Stomach (tissue), 19 donors: ENCODE measurements at regions of chr11 and their contacts with region 1.

Region 1: DNA sequence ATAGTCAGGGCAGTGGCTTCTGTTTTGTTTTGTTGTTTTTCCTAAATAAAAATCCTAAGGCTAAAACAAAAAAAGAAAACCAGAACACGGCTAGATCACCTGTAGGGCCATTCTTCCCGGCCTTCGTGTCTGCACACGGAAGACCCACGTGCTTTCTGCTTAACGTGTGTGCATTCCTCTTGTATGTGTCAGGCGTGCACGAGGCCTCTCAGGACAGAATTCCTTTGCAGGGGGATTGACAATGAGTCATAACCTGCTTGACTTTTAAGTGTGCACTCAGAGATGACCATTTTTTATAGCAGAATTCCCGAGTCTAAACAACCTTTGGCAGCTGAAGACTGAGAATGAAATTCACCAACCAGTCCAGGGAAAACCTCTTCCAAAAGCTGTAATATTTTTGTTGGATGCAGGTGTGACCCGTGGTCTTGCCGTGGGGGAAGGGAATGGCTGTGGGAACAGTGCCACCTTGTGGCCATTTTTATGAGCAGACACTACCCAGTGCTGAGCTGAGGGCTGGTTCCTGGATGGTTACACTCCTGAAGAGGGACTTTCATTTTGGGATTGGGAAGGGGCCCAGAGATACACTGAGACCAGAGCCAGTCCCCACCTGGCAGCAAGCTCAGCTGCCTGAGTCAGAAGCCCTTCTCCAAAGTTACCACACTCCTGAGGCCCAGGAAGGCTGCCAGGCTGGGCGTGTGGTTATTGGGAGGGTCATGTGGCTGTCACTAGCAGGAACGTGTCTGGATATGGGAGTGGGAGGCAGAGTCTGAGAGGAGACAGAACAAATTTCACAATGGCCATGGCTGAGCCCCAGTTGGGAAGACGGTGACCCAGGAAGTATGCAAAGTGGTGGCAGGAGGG is 35.8 kb upstream of the DKK3 start:
- DNase-seq: peak; percentile 83 to 93
- H3K4me3 ChIP-seq: no peak overlapping the region
- H3K27ac ChIP-seq: peak overlapping the region in 2 of 5 donors; percentile 56 to 71
- H3K4me1 ChIP-seq: peaks cover 9 to 26% (median 21%) of the 10 kb centered on the region in 4 donors
- H3K27me3 ChIP-seq: no peaks in the 10 kb centered on the region
- CTCF ChIP-seq: peak in 6 of 7 experiments; percentile 23 to 96 (median 90)
- EP300 ChIP-seq: no peak
- POLR2A ChIP-seq: no peak

Region 2: GRCh38 chr11:11608783-11609232 is 435.4 kb before region 1 on chr11:
- intact Hi-C with region 1: no loop called
- DNase-seq: peak in 1 of 2 donors; percentile 29
- H3K4me3 ChIP-seq: no peak overlapping the region
- H3K27ac ChIP-seq: no peak overlapping the region
- H3K4me1 ChIP-seq: no peaks in the 10 kb centered on the region
- H3K27me3 ChIP-seq: no peaks in the 10 kb centered on the region
- CTCF ChIP-seq: no peak
- EP300 ChIP-seq: no peak
- POLR2A ChIP-seq: no peak

Region 3: DNA sequence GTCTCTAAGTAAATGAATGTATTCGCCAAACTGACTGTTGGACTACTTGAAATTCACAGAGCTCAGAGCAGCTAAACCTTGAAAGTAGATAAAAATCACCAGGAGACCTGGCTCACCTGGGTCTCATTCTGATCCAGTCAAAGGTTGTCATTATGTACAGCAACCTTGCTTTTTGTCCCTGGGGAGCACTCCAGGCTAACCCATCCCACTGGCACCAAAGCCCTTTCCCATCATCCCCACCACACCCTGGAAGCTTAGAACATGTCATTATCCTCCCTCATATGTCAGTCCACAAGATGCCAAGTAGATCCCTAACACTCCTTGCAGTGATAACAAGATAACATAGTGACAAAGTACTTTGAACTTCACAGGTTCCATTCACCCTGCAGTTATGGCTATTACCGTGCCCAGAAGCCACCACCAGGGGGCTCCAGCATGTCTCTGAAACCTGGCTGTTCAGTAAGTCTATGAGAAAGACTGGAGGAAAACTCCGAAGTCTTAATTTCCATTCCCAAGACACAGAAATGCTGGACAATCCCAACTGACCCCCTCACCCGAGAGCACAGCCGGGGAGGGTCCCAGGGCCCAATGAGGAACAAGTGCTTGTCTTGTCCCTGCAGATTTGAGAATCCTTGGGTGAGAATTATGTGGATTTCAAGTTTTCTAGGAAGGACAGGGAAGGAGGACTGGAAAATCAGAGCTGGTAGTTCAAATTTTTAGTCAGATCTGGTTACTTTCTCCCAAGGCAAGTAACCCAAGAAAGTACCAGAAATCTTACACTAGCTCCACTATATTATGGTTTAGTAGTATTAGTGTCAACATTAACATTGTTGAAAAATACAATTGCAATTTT is 245.4 kb before region 1 on chr11:
- intact Hi-C with region 1: loop called (anchors 5 kb)
- DNase-seq: peak; percentile 90 to 91
- H3K4me3 ChIP-seq: no peak overlapping the region
- H3K27ac ChIP-seq: no peak overlapping the region
- H3K4me1 ChIP-seq: peaks cover 0 to 6% (median 0%) of the 10 kb centered on the region in 4 donors
- H3K27me3 ChIP-seq: peaks cover 0 to 4% (median 0%) of the 10 kb centered on the region in 3 donors
- CTCF ChIP-seq: peak in 5 of 7 experiments; percentile 68 to 95 (median 90)
- EP300 ChIP-seq: no peak
- POLR2A ChIP-seq: no peak

Region 4: GRCh38 chr11:11929920-11930319 is 114.3 kb before region 1 on chr11:
- intact Hi-C with region 1: loop called (anchors 5 kb)
- DNase-seq: no peak
- H3K4me3 ChIP-seq: no peak overlapping the region
- H3K27ac ChIP-seq: no peak overlapping the region
- H3K4me1 ChIP-seq: no peaks in the 10 kb centered on the region
- H3K27me3 ChIP-seq: no peaks in the 10 kb centered on the region
- CTCF ChIP-seq: no peak
- EP300 ChIP-seq: no peak
- POLR2A ChIP-seq: no peak

Region 5: DNA sequence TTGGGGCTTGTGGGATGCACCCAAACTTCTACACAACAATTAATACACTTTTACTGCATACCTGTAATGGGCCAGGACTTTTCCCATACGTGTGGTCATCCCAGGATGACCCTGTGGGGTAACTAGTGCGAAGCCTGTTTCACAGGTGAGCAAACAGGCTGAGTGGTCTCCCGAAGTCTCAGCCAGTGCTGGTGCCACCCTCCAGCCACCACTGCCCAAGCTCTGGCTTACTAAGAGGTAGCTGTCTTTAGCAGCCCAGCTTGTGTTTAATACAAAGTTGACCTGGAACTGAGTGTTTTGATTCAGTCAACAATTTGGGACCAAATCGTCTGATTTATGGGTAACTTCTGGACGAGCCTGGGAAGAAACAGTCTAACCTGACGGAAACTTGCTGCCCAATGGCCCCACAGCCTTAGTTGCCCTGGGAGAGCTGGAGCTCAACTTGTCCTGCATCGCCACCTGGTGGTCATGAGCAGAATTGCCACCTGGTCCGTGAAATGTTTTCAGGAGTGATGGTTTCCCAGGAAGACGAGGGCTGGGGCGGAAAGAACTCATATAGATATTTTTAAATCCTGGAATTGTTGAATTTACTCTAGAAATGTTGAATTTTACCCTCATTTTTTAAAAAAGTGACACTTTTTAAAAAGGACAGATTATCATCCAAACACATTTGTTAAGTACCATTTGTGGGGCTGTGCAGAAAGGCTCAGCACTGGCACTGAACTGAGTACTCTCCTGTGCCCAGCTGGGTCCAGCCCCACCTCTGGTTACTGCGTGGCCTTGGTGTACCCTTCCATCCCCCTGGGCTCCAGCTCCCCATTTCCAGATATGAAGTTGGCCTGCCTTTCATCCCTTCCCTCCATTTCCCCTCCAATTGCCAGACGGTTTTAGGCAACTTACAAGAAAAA is 237.6 kb after region 1 on chr11:
- intact Hi-C with region 1: loop called (anchors 5 kb)
- DNase-seq: peak; percentile 89 to 92
- H3K4me3 ChIP-seq: no peak overlapping the region
- H3K27ac ChIP-seq: peak overlapping the region in 2 of 5 donors; percentile 46 to 51
- H3K4me1 ChIP-seq: peaks cover 18 to 54% (median 37%) of the 10 kb centered on the region in 4 donors
- H3K27me3 ChIP-seq: no peaks in the 10 kb centered on the region
- CTCF ChIP-seq: peak in 6 of 7 experiments; percentile 97 to 99 (median 98)
- EP300 ChIP-seq: no peak
- POLR2A ChIP-seq: no peak